Cardiac septum (tissue), 1 donor: ENCODE measurements at regions of chr2 and their contacts with region 1.

Region 1: GRCh38 chr2:50143822-50144575 is 887.9 kb downstream of the NRXN1 start:
- DNase-seq: no peak

Region 2: DNA sequence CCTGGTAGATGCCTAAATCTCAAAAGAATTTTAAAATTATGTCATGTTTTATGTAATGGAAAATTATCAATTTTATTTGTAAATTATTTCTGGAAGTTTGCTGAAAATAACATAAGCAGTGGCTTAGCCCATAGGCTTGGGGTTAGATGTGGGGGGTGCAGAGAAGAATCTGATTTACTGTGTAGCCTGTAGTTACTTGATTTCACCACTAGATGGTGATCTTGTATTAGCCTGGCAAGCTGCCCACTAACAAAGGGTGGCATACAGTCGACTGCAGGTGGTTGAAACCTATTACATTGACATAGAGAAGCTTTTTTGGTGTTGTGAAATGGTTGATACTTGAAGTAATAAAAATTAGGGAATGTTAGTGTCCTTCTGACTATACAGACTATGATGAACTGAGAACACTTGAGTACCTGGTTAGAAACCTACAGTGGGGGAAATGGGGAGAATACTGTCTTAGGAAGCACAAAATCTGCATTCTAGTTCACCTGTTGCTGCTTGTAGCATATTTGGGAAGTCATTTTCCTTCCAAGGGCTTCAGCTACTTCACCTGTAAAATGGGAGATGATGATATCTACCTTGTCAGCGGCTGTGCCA is 1197.5 kb before region 1 on chr2:
- intact Hi-C with region 1: loop called (anchors 5 kb)
- DNase-seq: no peak

Region 3: GRCh38 chr2:49616800-49617199 is 527.2 kb before region 1 on chr2:
- intact Hi-C with region 1: loop called (anchors 10 kb)
- DNase-seq: no peak

Region 4: GRCh38 chr2:49687918-49688317 is 456.1 kb before region 1 on chr2:
- intact Hi-C with region 1: loop called (anchors 5 kb)
- DNase-seq: no peak

Region 5: DNA sequence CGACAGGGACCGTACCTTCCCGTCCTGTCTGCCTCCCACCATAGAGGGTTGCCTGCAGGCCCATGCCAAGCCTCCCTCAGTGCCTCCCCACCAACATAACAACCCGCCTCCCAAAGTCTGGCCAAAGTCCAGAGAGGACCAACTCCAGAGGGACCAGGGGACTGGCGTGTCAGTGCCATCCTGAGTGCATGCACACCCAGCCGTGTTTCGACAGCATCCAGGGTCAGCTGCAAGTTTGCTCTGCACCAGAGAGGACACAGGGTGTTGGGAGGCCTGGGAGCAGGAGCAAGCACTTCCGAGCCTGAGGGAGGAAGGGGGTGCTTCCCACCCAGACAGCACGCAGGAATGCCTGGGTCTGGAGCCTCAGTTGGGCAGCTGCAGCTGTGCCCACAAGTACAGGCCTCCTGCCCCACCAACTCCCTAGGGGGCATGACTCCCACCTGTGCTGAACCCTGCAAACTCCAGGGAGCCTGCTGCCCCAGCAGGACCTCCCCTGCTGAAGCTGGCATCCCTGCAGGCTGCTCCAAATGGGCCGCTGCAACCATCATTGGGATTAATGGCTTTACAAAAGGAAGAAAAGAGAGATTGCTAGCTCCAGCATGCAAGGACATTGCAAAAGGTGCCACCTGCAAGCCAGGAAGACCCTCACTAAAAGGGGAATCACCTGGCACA is 371.6 kb before region 1 on chr2:
- intact Hi-C with region 1: loop called (anchors 2 kb)
- DNase-seq: no peak

Region 6: DNA sequence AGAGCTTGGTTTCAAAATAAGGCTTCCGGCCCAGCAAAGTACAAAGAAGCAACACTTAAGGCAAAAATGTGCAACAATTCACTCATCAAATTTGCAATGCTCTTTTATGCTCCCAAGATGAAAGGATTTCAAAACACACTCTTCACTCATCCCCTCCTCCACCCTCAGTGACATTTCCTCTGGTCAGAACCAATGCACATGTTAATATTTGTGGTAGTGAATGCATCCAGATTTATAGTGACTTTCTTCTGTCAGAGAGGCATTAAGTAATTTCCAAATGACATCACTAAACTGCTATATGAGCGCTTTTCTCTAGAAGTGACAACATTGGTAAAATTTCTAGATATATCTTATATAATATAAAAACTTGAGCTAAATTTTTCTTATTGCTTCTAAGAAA is 87.5 kb after region 1 on chr2:
- intact Hi-C with region 1: no loop called
- DNase-seq: no peak

Region 7: GRCh38 chr2:50922506-50922905 is 778.5 kb after region 1 on chr2:
- intact Hi-C with region 1: no loop called
- DNase-seq: no peak